ENCODE measurements at regions of chr15 and their contacts with region 1.

Region 1: DNA sequence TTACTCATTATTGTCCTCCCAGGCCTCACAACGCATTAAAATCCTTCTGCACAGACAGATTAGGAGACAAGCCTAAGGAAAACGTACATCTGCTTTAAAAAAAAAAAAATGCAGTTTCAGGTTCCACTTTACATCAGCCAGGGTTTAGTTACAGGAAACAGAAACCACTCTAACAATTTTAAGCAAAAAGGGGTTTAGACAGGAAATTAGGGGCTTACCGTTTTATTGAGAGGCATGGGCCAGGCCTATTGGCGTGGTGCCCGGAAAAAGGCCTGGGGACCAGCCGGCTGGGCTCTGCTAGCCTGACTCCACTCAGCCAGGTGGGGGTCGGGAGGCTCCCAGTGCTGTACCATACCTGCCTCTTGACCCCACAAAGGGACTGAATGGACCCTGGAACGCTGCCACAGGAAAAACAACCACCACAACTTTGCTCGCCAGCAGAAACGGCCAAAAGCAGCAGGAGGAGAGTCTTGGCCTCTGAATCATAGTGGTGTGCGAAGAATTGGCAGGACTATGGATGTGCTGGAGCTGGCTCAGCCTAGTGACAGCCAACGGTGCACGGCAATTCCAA is 124.3 kb downstream of the CHSY1 start:
- DNase-seq: peak; percentile 99
- H3K4me3 ChIP-seq: no peak overlapping the region
- CTCF ChIP-seq: no peak

Region 2: GRCh38 chr15:101027273-101027901 is 100.2 kb before region 1 on chr15:
- in situ Hi-C with region 1: loop called (anchors 5 kb)
- DNase-seq: no peak
- H3K4me3 ChIP-seq: no peak overlapping the region
- CTCF ChIP-seq: no peak

Region 3: DNA sequence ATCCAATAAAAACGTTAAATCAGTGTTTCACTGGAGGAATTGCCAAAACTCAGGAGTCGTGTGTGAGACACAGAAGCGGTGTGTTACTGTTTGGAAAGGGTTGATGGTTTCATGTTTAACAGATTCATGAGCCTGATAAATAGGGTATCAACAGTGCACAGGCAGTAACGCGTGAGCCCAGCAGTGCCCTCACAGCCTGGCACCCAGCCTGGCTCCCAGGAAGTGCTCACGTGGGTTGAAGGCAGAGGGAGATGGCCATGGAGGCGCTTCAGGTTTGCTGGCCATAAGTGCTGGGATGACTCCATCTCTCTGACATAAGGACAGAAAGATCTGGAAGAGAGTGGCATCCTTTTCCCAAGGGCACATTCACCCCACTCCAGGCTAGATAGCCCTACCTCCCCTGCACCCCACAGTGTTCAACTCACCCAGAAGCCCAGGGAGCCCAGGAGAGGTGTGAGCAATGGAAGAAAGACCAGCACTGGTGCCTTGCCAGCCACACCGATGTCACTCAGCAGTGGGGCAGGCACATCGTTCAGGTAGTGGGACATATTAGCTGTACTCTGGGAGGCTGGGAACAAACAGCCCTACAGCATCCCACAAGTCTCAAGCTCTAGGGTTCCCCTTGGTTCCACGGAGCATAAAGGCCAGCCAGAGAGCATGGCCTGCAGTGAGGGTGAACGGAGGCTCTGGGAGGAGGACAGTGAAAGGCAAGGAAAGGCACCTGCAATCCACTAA is 44.1 kb before region 1 on chr15:
- in situ Hi-C with region 1: loop called (anchors 5 kb)
- DNase-seq: no peak
- H3K4me3 ChIP-seq: no peak overlapping the region
- CTCF ChIP-seq: no peak

Region 4: DNA sequence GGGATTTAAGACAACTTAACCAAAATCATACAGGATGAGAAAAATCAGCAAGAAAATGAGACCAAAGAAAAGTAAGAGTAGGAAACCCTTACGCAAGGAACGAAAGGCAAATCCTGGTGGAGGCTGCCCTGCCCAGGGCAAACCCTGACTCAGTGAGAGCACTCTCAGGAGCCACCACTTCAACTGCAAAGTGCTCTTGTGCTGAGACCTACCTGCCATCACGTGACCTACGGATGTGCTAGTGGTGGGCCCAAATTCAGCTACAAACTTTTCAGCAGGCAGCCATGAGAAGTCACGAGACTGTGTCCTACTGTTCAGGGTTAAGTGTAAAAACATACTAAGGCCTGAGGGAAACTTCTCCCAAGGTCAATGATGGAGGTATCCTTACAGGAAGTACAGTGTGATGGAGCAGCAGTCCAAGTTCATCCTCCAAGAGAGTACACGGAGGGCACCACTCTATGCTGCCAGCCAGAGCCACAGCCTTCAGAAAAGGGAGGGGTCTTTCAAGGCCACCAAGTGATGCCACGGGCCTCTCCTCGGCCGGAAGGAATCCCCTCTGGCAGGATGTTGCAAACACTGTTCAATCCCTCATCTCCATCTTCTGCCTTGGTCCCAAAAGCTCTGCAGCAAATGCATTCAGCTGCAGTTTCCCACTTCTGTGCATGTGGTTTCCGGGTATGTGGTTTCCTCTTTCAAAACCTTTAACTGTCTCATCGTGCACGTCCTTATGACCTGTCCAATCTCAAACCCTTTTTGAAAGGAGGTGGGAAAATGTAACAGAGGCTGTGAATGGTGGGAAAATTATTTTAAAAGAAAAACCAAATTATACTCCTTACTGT is 114.8 kb after region 1 on chr15:
- in situ Hi-C with region 1: loop called (anchors 10 kb)
- DNase-seq: no peak
- H3K4me3 ChIP-seq: no peak overlapping the region
- CTCF ChIP-seq: no peak

Measured in astrocyte of the cerebellum (primary cell).